ENCODE measurements at regions of chr1 and their contacts with region 1.

Region 1: DNA sequence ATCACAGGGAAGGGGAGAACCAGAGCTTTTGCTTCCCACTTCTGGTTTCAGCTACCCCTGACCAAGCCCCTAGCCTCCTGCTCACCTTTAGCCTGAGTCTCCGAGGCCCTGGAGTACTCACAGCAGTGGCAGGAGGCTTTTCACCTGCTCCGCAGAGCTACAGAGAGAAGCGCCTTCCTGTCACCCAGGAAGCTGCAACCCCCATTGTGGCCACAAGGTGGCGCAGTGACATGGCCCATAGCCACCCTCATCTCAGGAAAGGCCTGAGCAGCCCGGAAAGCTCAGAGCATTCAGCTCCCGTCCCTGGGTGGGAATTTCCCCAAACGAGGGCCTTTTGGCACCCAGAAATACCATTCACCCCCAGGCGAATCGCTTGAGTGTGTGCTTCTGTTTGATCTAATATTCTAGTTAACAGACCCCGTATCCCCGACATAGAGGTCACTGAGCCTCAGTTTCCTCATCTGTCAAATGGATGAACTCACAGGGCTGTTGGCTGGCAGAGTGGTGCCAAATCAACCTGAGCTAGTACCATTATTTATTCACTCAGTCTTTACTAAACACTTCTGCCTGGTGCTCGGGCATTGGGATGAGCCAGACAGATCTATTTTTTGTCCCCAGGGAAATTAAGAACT is 25.3 kb downstream of the A3GALT2 start:
- DNase-seq: peak; percentile 59 to 97
- H3K4me3 ChIP-seq: no peak overlapping the region
- H3K27ac ChIP-seq: no peak overlapping the region
- H3K4me1 ChIP-seq: peaks cover 0 to 6% (median 0%) of the 10 kb centered on the region in 4 experiments; a peak in 3 of 7 replicates
- H3K27me3 ChIP-seq: no peaks in the 10 kb centered on the region
- CTCF ChIP-seq: peak; percentile 89 to 94 (median 90)
- EP300 ChIP-seq: no peak
- POLR2A ChIP-seq: no peak
- RAD21 ChIP-seq: peak; percentile 84 to 85

Region 2: GRCh38 chr1:32702599-32703478 is 592.7 kb before region 1 on chr1 and contains the start of gene SYNC:
- CTCF ChIA-PET with region 1: no interaction called
- POLR2A ChIA-PET with region 1: no interaction called
- DNase-seq: no peak
- H3K4me3 ChIP-seq: peak within 1 kb of the TSS; percentile 29 to 69 (median 46)
- H3K27ac ChIP-seq: no peak within 1 kb of the TSS
- H3K4me1 ChIP-seq: peaks cover 0 to 15% (median 6%) of the 10 kb centered on the region in 4 experiments; a peak in 6 of 7 replicates
- H3K27me3 ChIP-seq: peaks cover 5 to 35% (median 29%) of the 10 kb centered on the region in 4 experiments
- CTCF ChIP-seq: no peak
- EP300 ChIP-seq: no peak
- POLR2A ChIP-seq: no peak
- RAD21 ChIP-seq: no peak
- total RNA-seq, gene SYNC: 0.17 TPM in 1 of 2 replicates, not detected in the other

Region 3: GRCh38 chr1:33219881-33220661 is 75.5 kb before region 1 on chr1:
- CTCF ChIA-PET with region 1: interaction called, 16 read pairs
- POLR2A ChIA-PET with region 1: interaction called, 3 read pairs
- DNase-seq: no peak
- H3K4me3 ChIP-seq: no peak overlapping the region
- H3K27ac ChIP-seq: no peak overlapping the region
- H3K4me1 ChIP-seq: no peaks in the 10 kb centered on the region
- H3K27me3 ChIP-seq: no peaks in the 10 kb centered on the region
- CTCF ChIP-seq: no peak
- EP300 ChIP-seq: no peak
- POLR2A ChIP-seq: no peak
- RAD21 ChIP-seq: 0 out of 4 replicates have a peak, but pooled peaks of 1 of the 2 experiments have one; percentile 8

Region 4: DNA sequence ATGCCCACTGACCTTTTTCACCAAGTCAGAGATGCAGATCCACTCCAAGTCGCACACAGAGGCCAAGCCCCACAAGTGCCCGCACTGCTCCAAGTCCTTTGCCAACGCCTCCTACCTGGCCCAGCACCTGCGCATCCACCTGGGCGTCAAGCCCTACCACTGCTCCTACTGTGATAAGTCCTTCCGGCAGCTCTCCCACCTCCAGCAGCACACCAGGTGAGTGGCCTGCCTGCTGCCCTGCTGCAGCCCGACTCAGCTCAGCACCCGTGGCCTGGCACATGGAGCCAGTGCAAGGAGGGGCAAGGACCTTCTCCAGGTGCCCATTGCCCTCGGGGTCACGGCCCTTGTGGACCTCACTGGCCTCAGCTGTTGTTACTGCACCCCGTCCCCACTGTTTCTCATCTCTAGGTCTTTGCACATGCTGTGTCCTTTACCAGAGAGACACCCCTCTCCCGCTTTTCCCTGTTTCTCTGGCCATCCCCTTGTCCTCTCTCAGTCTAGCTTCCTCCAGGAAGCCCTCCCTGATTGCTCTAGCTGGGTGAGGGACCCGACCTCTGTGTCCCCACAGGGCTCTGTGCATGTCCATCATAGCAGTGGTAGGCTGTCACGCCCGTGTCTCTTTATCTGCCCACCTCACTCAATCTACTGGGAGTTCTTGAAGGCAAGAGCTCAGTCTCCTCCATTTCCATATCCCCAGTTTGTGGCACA is 13.8 kb before region 1 on chr1:
- CTCF ChIA-PET with region 1: interaction called, 20 read pairs
- POLR2A ChIA-PET with region 1: no interaction called
- DNase-seq: no peak
- H3K4me3 ChIP-seq: no peak overlapping the region
- H3K27ac ChIP-seq: no peak overlapping the region
- H3K4me1 ChIP-seq: no peaks in the 10 kb centered on the region
- H3K27me3 ChIP-seq: no peaks in the 10 kb centered on the region
- CTCF ChIP-seq: no peak
- EP300 ChIP-seq: no peak
- POLR2A ChIP-seq: no peak
- RAD21 ChIP-seq: no peak

Region 5: GRCh38 chr1:33319949-33320605 is 24.5 kb after region 1 on chr1:
- CTCF ChIA-PET with region 1: interaction called, 32 read pairs
- POLR2A ChIA-PET with region 1: no interaction called
- DNase-seq: no peak
- H3K4me3 ChIP-seq: no peak overlapping the region
- H3K27ac ChIP-seq: no peak overlapping the region
- H3K4me1 ChIP-seq: no peaks in the 10 kb centered on the region
- H3K27me3 ChIP-seq: no peaks in the 10 kb centered on the region
- CTCF ChIP-seq: no peak
- EP300 ChIP-seq: no peak
- POLR2A ChIP-seq: no peak
- RAD21 ChIP-seq: no peak

Region 6: GRCh38 chr1:33342041-33342723 is 46.6 kb after region 1 on chr1:
- CTCF ChIA-PET with region 1: interaction called, 37 read pairs
- POLR2A ChIA-PET with region 1: no interaction called
- DNase-seq: peak; percentile 48 to 77
- H3K4me3 ChIP-seq: peak overlapping the region in 3 of 4 experiments; percentile 4 to 33 (median 11); a peak in 4 of 8 replicates
- H3K27ac ChIP-seq: no peak overlapping the region; the same call in 1 of the 2 replicates
- H3K4me1 ChIP-seq: peaks cover 23 to 56% (median 31%) of the 10 kb centered on the region in 4 experiments
- H3K27me3 ChIP-seq: peaks cover 3 to 14% (median 10%) of the 10 kb centered on the region in 4 experiments
- CTCF ChIP-seq: no peak
- EP300 ChIP-seq: peak; percentile 2 to 88; a peak in 2 of 3 replicates
- POLR2A ChIP-seq: no peak; a peak in 1 of 3 replicates
- RAD21 ChIP-seq: peak; percentile 12 to 25; a peak in 1 of 4 replicates

Region 7: GRCh38 chr1:33367485-33368405 is 72.2 kb after region 1 on chr1:
- CTCF ChIA-PET with region 1: interaction called, 180 read pairs
- POLR2A ChIA-PET with region 1: no interaction called
- DNase-seq: peak; percentile 58 to 95
- H3K4me3 ChIP-seq: no peak overlapping the region
- H3K27ac ChIP-seq: no peak overlapping the region
- H3K4me1 ChIP-seq: peaks cover 13 to 29% (median 18%) of the 10 kb centered on the region in 4 experiments
- H3K27me3 ChIP-seq: no peaks in the 10 kb centered on the region; a peak in 2 of 7 replicates
- CTCF ChIP-seq: peak; percentile 94 to 97 (median 97)
- EP300 ChIP-seq: no peak
- POLR2A ChIP-seq: no peak
- RAD21 ChIP-seq: peak; percentile 98 to 99

Region 8: DNA sequence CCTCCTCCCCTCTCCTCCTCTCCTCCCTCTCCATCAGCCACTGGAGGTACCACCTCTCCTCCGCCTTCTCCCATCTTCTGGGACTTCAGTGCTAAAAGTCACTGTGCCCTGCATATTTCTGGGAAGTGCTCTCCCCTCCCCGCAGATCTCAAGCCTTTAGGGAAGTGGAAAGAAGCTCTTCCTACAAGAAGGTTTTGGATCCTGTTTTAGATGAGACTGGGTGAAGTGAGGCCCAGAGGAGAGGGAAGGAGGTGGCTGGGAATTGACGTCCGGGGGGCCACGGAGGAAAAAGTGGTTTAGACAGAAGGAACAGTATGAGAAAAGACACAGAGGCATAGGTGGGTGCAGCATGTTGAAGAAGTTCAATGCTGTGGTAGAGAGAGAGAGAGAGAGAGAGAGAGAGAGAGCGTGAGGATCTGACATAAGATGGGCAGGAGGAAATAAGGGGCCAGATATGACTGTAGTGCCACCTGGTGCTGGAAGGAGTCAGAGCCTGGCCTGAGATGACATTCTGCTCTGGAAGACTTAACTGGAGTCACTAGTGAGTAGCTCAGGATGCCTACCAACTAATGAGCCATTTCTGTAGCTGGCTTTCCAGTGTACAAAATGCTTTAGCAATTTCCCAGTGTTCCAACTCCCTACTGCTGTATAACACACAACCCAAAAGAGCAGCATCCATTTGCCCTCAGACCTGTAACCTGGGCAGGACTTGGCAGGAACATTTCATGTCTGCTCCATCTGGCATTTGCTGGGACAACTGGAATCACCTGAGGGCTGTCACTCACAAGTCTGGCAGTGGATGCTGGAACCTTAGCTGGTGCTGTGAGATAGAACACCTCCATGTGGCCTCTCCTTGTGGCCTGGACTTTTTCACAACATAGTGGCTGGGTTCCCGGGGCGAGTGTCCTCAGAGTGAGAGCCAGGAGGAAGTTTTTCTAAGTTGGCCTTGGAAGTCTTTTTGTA is 160.3 kb after region 1 on chr1:
- CTCF ChIA-PET with region 1: interaction called, 26 read pairs
- POLR2A ChIA-PET with region 1: interaction called, 3 read pairs
- DNase-seq: peak in 1 of 2 experiments; percentile 52
- H3K4me3 ChIP-seq: no peak overlapping the region
- H3K27ac ChIP-seq: no peak overlapping the region
- H3K4me1 ChIP-seq: peaks cover 0 to 3% (median 1%) of the 10 kb centered on the region in 4 experiments; a peak in 3 of 7 replicates
- H3K27me3 ChIP-seq: 0 out of 7 replicates have a peak, but pooled peaks cover 0 to 2% (median 0%) of the 10 kb centered on the region in 4 experiments
- CTCF ChIP-seq: peak; percentile 68 to 93 (median 77)
- EP300 ChIP-seq: no peak
- POLR2A ChIP-seq: no peak
- RAD21 ChIP-seq: peak; percentile 83 to 87

Region 9: DNA sequence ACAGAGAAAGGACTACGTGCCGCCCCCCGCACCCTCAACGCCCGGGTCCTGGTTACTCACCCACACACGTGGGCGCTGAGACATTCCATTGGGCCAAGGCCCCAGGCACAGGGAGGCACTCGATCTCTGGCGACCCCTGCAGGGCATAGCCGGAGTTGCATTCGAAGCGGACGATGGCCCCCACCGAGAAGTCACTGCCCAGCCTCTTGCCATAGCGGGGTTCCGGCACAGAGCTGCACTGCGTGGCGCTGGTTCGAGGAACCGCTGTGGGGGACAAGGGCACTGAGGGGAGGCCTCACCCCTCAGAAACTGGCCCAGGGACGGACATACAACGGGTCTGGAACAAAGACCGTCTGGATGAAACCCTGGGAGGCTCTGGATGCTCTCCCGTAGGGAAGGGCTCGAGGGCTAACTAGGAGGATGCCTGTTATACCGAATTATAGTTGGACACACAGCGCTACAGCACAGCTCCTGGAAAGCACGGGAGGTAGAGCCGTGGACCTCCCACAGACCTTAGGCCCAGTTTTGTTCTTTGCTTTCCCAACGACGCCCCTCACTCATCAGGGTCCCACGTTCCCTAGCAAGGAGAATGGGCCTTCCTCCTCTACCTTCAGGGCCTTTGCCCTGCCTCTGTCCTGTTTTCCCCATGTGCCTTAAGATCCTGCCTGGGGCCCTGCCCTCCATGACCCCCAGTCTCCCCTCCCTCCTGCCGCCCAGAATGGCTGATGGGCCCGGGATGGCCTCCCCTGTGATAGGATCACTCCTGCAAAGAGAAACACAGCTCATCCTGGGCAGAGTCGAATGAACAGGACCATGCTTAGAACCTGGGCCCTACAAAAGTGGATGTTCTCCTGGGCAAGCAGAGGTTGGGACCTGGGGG is 329.7 kb after region 1 on chr1:
- CTCF ChIA-PET with region 1: no interaction called
- POLR2A ChIA-PET with region 1: no interaction called
- DNase-seq: peak in 1 of 2 experiments; percentile 92
- H3K4me3 ChIP-seq: no peak overlapping the region
- H3K27ac ChIP-seq: no peak overlapping the region
- H3K4me1 ChIP-seq: no peaks in the 10 kb centered on the region
- H3K27me3 ChIP-seq: no peaks in the 10 kb centered on the region; a peak in 1 of 7 replicates
- CTCF ChIP-seq: peak; percentile 60 to 88 (median 87)
- EP300 ChIP-seq: no peak
- POLR2A ChIP-seq: no peak
- RAD21 ChIP-seq: peak; percentile 33 to 38

Measured in H1 (cell line).